ENCODE measurements at regions of chr11 and their contacts with region 1.

Region 1: GRCh38 chr11:61827571-61828378 is at the start of gene FADS2:
- DNase-seq: peak; percentile 93
- ATAC-seq: peak; percentile 82
- H3K4me3 ChIP-seq: peak within 1 kb of the TSS; percentile 88
- H3K27ac ChIP-seq: peak within 1 kb of the TSS; percentile 80
- H3K4me1 ChIP-seq: peaks cover 21% of the 10 kb centered on the region
- H3K27me3 ChIP-seq: no peaks in the 10 kb centered on the region
- CTCF ChIP-seq: no peak
- total RNA-seq, gene FADS2: 246 and 305 TPM in 2 replicates

Region 2: DNA sequence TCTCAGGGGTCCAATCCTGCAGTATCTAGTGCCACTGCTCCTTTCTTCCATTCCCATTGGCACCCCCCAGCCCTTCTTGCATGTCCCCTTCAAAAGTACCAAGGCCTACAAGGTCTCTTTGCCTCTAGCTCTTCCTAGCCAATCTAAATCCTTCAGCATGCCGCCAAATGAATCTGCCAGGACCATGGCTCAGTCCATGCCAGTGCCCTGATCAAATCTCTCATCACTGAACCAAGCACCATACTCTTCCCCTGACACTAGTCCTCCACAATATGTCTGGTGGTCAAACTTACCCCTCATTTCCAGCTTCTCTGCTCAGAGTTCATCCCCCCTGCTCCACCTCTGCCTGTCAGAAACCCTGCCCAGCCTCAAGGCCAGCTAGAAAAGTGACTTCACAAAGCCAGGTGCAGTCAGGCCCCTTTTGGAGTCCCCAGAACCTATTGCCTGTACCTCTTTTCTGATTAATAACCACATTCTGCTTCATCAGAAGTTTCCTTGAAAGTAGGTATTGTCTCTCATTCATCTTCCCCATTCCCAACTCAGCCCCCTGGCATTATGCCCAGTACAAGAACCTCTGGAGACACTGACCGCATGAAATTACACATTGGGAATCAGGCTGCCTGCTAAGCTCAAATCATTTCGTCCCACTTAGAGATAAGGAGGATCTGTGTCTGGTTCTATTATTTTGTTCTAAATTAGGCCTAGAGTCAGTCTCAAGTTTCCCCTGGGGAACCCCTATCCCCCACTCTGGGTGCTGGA is 23.7 kb before region 1 on chr11:
- CTCF ChIA-PET with region 1: interaction called, 4 read pairs
- POLR2A ChIA-PET with region 1: interaction called, 10 read pairs
- intact Hi-C with region 1: no loop called
- DNase-seq: no peak
- ATAC-seq: no peak
- H3K4me3 ChIP-seq: no peak overlapping the region
- H3K27ac ChIP-seq: no peak overlapping the region
- H3K4me1 ChIP-seq: peaks cover 10% of the 10 kb centered on the region
- H3K27me3 ChIP-seq: no peaks in the 10 kb centered on the region
- CTCF ChIP-seq: no peak